Panc1 (cell line): ENCODE measurements at regions of chr9 and their contacts with region 1.

Region 1: GRCh38 chr9:131773911-131774379 is 34.1 kb upstream of the RAPGEF1 start:
- DNase-seq: no peak
- ATAC-seq: peak; percentile 70; the same call in 1 of the 2 replicates
- H3K4me3 ChIP-seq: no peak overlapping the region
- H3K27ac ChIP-seq: no peak overlapping the region
- H3K4me1 ChIP-seq: no peaks in the 10 kb centered on the region
- H3K27me3 ChIP-seq: no peaks in the 10 kb centered on the region
- CTCF ChIP-seq: no peak

Region 2: GRCh38 chr9:132141344-132141947 is 367.5 kb after region 1 on chr9:
- CTCF ChIA-PET with region 1: no interaction called
- POLR2A ChIA-PET with region 1: interaction called, 19 read pairs
- in situ Hi-C with region 1: no loop called
- intact Hi-C with region 1: no loop called
- DNase-seq: no peak
- ATAC-seq: peak; percentile 77
- H3K4me3 ChIP-seq: peak overlapping the region; percentile 18 to 45
- H3K27ac ChIP-seq: no peak overlapping the region
- H3K4me1 ChIP-seq: peaks cover 5% of the 10 kb centered on the region; the same call in 1 of the 2 replicates
- H3K27me3 ChIP-seq: no peaks in the 10 kb centered on the region
- CTCF ChIP-seq: no peak

Region 3: GRCh38 chr9:132424857-132425686 is 651.1 kb after region 1 on chr9:
- CTCF ChIA-PET with region 1: interaction called, 10 read pairs
- POLR2A ChIA-PET with region 1: no interaction called
- in situ Hi-C with region 1: no loop called
- intact Hi-C with region 1: no loop called
- DNase-seq: no peak
- ATAC-seq: no peak
- H3K4me3 ChIP-seq: no peak overlapping the region
- H3K27ac ChIP-seq: no peak overlapping the region
- H3K4me1 ChIP-seq: no peaks in the 10 kb centered on the region
- H3K27me3 ChIP-seq: 0 out of 2 replicates have a peak, but pooled peaks cover 3% of the 10 kb centered on the region
- CTCF ChIP-seq: no peak

Region 4: DNA sequence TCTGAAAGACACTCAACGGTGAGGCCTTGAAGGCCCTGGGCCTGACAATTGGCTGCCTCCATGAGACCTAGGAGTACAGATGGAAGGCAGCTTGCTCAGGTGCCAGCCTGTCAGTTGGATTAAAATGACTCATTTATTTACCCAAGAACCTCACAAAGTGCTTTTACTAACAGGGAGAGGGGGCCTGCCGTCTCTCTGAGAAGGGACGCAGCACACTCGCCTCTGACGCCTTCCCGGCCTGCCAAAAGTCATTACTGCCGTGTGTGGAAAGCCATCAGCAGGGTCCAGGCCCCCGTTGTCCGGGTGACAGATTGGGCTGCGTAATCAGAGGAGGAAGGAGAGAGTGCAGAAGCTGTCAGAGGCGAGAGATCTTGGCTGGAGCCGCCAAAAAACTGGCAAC is 863.4 kb after region 1 on chr9:
- CTCF ChIA-PET with region 1: no interaction called
- POLR2A ChIA-PET with region 1: no interaction called
- in situ Hi-C with region 1: no loop called
- intact Hi-C with region 1: no loop called
- DNase-seq: no peak
- ATAC-seq: no peak
- H3K4me3 ChIP-seq: no peak overlapping the region
- H3K27ac ChIP-seq: no peak overlapping the region
- H3K4me1 ChIP-seq: no peaks in the 10 kb centered on the region
- H3K27me3 ChIP-seq: no peaks in the 10 kb centered on the region
- CTCF ChIP-seq: no peak